Activated CD4-positive, alpha-beta memory T cell treated with anti-CD3 and anti-CD28 coated beads, Interleukin-2, amount 10 ng/mL, durations not matched to agents 7 days and 5 days (primary cell): ENCODE measurements at regions of chr10 and their contacts with region 1.

Region 1: GRCh38 chr10:11209830-11210181 is 192.1 kb downstream of the CELF2 start:
- DNase-seq: no peak
- H3K4me3 Mint-ChIP-seq: peak overlapping the region; percentile 56
- H3K27ac Mint-ChIP-seq: peak overlapping the region; percentile 68
- H3K4me1 Mint-ChIP-seq: peaks cover 98% of the 10 kb centered on the region
- H3K27me3 Mint-ChIP-seq: no peaks in the 10 kb centered on the region

Region 2: GRCh38 chr10:11170993-11171851 is 38.6 kb before region 1 on chr10:
- CTCF ChIA-PET with region 1: no interaction called
- POLR2A ChIA-PET with region 1: interaction called, 11 read pairs
- DNase-seq: peak; percentile 58
- H3K4me3 Mint-ChIP-seq: no peak overlapping the region
- H3K27ac Mint-ChIP-seq: no peak overlapping the region
- H3K4me1 Mint-ChIP-seq: peaks cover 39% of the 10 kb centered on the region
- H3K27me3 Mint-ChIP-seq: no peaks in the 10 kb centered on the region

Region 3: GRCh38 chr10:11197266-11197712 is 12.5 kb before region 1 on chr10:
- CTCF ChIA-PET with region 1: interaction called, 3 read pairs
- POLR2A ChIA-PET with region 1: interaction called, 21 read pairs
- DNase-seq: no peak
- H3K4me3 Mint-ChIP-seq: no peak overlapping the region
- H3K27ac Mint-ChIP-seq: no peak overlapping the region
- H3K4me1 Mint-ChIP-seq: peaks cover 94% of the 10 kb centered on the region
- H3K27me3 Mint-ChIP-seq: no peaks in the 10 kb centered on the region

Region 4: DNA sequence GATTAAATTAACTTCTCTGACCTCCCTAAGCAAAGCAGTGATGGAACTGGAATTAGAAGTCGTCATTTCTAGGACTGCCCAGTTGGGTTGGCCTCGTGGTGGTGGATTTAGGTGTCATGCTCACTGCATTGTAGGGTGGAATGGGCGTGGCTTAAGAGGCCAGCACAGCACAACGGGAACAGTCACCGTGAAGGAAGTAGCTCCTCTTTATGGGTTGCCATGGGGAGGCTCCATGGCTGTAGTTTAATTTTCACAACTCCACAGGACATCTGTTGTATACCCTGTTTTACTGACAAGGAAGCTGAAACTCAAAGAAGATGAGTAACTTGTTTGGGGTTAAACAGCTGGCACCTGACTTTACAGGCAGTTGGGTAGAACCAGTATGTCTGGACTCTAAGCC is 16.1 kb after region 1 on chr10:
- CTCF ChIA-PET with region 1: interaction called, 6 read pairs
- POLR2A ChIA-PET with region 1: interaction called, 52 read pairs
- DNase-seq: peak; percentile 74
- H3K4me3 Mint-ChIP-seq: no peak overlapping the region
- H3K27ac Mint-ChIP-seq: peak overlapping the region; percentile 89
- H3K4me1 Mint-ChIP-seq: peaks cover 93% of the 10 kb centered on the region
- H3K27me3 Mint-ChIP-seq: no peaks in the 10 kb centered on the region